ENCODE measurements at regions of chr12 and their contacts with region 1.

Region 1: GRCh38 chr12:10140001-10140400 is 10.0 kb upstream of the CLEC7A start:
- DNase-seq: no peak
- H3K4me3 ChIP-seq: no peak overlapping the region
- H3K27ac ChIP-seq: no peak overlapping the region
- H3K4me1 ChIP-seq: peaks cover 17% of the 10 kb centered on the region
- H3K27me3 ChIP-seq: no peaks in the 10 kb centered on the region
- CTCF ChIP-seq: peak; percentile 70

Region 2: DNA sequence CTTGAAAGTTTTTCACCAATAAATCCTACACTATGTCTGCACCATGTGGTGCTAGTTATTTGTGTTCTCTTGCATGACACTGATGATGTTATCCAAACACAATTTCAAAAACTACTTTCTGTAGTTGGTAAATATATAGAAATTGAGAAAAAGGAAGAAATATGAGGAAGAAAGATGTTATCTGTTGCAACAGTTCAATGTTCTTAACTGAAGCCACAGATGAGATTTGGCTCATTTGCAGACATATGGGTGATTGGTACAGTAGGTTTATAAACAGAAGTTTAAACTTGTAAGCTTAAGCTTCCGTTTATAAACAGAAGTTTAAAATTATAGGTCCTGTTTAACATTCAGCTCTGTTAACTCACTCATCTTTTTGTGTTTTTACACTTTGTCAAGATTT is 168.8 kb before region 1 on chr12 and contains the start of gene CLEC12A:
- intact Hi-C with region 1: no loop called
- DNase-seq: no peak
- H3K4me3 ChIP-seq: peak within 1 kb of the TSS; percentile 4
- H3K27ac ChIP-seq: no peak within 1 kb of the TSS
- H3K4me1 ChIP-seq: no peaks in the 10 kb centered on the region
- H3K27me3 ChIP-seq: no peaks in the 10 kb centered on the region
- CTCF ChIP-seq: no peak
- total RNA-seq, gene CLEC12A: 5.7 TPM

Region 3: DNA sequence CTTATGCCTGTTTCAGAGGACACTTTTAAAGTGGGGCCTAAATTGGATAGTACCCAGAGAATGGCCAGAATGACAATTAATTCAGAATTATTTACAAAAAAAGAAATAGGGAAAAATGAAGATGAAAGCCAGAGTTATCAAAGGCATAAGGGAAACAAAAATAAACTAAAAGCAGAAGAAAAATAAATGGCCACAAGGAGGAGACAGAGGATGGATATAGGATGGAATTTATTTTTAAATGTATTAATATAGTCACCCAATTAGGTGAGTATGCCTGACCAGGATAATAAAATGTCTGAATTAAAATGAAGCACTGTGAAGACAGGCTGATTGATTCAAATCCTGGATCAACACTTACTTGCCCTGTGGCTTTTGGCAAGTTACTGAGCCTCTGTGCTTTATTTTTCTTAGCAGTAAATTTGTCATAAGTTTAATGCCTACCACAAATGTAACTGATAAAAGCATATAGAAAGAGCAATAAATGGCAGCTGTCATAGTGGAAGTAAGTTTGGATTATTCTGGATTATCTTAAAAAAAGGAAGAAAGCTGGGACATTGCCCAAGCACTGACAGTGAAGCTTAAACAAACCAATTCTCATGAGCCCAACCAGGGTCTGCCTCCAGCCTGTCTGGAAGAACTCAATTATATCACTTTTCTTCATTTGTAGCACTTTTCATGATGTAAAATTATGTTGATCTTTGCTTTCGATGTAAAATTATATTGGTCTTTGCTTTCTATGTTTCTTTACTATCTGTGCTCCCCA is 106.0 kb before region 1 on chr12:
- intact Hi-C with region 1: loop called (anchors 2 kb)
- DNase-seq: no peak
- H3K4me3 ChIP-seq: no peak overlapping the region
- H3K27ac ChIP-seq: no peak overlapping the region
- H3K4me1 ChIP-seq: no peaks in the 10 kb centered on the region
- H3K27me3 ChIP-seq: no peaks in the 10 kb centered on the region
- CTCF ChIP-seq: peak; percentile 69

Region 4: DNA sequence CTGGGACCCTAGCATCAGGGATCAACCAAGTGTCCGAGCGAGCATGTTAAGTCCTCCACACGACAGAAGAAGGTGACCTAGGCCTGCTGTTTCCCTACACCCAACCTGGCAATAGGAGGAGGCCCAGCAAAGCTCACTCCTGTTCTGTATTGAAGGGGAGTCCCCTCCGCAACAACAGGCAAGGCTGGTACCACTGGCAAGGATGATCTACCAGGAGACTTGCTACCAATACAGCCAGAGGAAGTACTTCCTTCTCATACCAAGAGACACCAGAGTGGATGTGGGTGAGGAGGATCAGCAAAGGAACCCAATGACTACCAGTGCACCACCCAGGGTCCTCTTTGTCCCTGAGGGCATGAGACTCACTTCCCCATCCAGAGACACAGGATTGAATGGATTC is 308.2 kb after region 1 on chr12:
- intact Hi-C with region 1: no loop called
- DNase-seq: no peak
- H3K4me3 ChIP-seq: no peak overlapping the region
- H3K27ac ChIP-seq: no peak overlapping the region
- H3K4me1 ChIP-seq: no peaks in the 10 kb centered on the region
- H3K27me3 ChIP-seq: no peaks in the 10 kb centered on the region
- CTCF ChIP-seq: no peak

Measured in left ventricle myocardium inferior (tissue), 1 donor.